Gastrocnemius medialis (tissue), 4 donors: ENCODE measurements at regions of chr1 and their contacts with region 1.

Region 1: DNA sequence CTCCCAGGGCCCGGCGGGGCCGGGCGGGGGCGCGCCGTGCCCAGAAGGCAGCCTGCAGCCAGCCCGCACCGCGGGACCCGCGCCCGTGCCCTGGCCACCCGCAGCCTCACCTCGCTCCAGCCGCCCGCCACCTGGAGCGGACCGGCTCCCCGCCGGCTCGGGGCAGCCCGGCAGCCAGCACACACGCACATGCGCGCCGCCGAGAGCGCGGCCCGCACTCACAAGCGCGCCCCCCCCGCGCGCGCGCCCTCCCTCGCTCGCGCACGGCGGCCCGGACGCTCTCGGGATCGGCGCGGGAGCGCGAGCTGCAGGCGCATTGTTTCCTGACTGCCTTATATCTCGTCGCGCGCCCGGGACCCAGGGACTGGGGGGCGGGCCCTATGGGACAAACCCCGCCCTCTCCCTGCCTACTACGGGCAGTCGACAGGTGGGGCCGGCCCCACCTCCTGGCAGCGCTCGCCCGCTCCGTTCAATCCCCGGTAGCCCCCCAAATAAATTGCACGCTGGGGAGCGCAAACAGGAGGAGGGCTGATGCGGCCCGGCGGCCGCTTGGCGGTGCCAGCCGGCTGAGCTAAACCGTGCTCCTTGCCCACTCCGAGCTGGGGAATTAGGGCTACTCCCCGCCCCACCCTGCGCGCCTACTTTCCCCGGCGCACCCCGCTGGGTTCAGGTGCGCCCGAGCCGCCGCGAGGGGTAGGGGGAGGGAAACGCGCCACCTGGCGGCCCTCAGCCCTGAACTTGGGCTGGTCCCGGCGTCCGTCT is at the start of gene MYCL:
- DNase-seq: peak in 1 of 2 donors; percentile 34
- ATAC-seq: peak; percentile 69 to 76
- H3K4me3 ChIP-seq: peak within 1 kb of the TSS; percentile 64 to 85 (median 67)
- H3K27ac ChIP-seq: peak within 1 kb of the TSS in 1 of 4 donors; percentile 19
- H3K4me1 ChIP-seq: peaks cover 4% of the 10 kb centered on the region in 2 donors
- H3K27me3 ChIP-seq: peaks cover 0 to 17% (median 4%) of the 10 kb centered on the region in 3 donors
- CTCF ChIP-seq: peak; percentile 19 to 77 (median 70)
- POLR2A ChIP-seq: peak; percentile 43 to 61
- total RNA-seq, gene MYCL: 0.35 to 1.1 TPM in 2 of 4 donors, not detected in the others

Region 2: DNA sequence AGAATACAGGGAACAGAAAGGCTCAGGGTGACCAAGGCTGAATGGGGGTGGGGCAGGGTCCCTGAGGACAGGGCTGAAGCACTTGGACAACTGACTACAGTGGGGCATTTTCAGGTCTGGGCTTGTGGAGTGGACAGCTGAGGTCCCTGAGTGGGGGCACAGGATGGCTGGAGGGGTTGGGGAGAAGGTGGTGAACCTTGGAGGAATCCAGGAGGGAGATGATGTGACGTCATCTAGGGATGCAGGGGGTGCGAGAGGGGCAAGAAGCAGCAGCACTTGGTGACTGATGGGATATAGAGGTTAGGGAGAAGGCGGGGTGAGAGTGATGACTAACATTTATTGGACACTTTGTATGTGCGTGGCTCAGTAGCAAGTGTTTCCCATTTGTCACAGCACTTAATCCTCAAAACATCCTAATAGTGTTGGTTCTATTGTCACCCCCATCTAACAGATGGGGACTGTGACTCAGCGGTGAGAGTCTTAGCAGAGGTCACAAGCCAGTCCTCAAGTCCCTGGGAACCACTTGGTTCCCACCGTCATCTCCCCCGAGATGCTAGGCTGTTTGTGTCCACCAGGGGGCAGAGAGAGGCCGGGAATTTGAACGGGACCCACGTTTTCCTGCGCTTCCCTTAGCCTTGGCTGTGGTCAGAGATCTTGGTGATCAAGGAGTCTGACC is 85.3 kb before region 1 on chr1:
- in situ Hi-C with region 1: loop called in 2 of 4 experiments (anchors 10 kb)
- intact Hi-C with region 1: loop called (anchors 1 kb)
- DNase-seq: peak; percentile 30 to 59
- ATAC-seq: peak; percentile 83 to 85
- H3K4me3 ChIP-seq: no peak overlapping the region
- H3K27ac ChIP-seq: no peak overlapping the region
- H3K4me1 ChIP-seq: no peaks in the 10 kb centered on the region
- H3K27me3 ChIP-seq: peaks cover 0 to 3% (median 0%) of the 10 kb centered on the region in 3 donors
- CTCF ChIP-seq: peak; percentile 76 to 94 (median 87)
- POLR2A ChIP-seq: no peak

Region 3: GRCh38 chr1:39825432-39825951 is 76.4 kb before region 1 on chr1:
- in situ Hi-C with region 1: loop called in 2 of 4 experiments (anchors 10 kb)
- intact Hi-C with region 1: no loop called
- DNase-seq: no peak
- ATAC-seq: no peak
- H3K4me3 ChIP-seq: no peak overlapping the region
- H3K27ac ChIP-seq: no peak overlapping the region
- H3K4me1 ChIP-seq: no peaks in the 10 kb centered on the region
- H3K27me3 ChIP-seq: peaks cover 0 to 3% (median 3%) of the 10 kb centered on the region in 3 donors
- CTCF ChIP-seq: no peak
- POLR2A ChIP-seq: no peak

Region 4: DNA sequence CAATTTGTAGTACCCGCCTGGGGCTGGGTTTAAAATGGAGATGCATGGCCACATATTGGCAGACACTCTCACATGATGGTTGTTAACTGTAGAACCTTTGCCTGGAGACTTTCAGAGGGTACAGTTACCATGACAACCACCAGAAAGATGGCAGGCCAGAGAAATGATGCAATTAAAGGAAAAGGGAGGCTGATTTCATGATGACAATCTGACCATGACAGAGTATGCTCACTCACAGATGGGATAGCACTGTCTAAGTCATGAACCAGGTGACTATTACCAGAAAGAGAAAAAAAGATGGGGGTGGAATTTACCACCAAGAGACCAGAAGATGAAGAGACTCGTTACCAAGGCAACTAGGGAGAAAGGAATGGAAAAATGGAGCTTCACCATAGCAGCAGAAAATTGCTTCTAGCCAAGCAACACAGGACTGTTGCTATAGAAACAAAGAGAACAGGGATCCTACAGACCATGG is 15.1 kb before region 1 on chr1:
- in situ Hi-C with region 1: no loop called
- intact Hi-C with region 1: loop called (anchors 1 kb)
- DNase-seq: no peak
- ATAC-seq: no peak
- H3K4me3 ChIP-seq: no peak overlapping the region
- H3K27ac ChIP-seq: no peak overlapping the region
- H3K4me1 ChIP-seq: peaks cover 10 to 11% of the 10 kb centered on the region in 2 donors
- H3K27me3 ChIP-seq: peaks cover 0 to 3% (median 0%) of the 10 kb centered on the region in 3 donors
- CTCF ChIP-seq: no peak
- POLR2A ChIP-seq: no peak